ENCODE measurements at regions of chr5 and their contacts with region 1.

Region 1: GRCh38 chr5:134439210-134439664 is 27.6 kb upstream of the CDKN2AIPNL start:
- DNase-seq: peak; percentile 94
- H3K4me3 ChIP-seq: no peak overlapping the region
- H3K27ac ChIP-seq: peak overlapping the region; percentile 72 to 85 (median 81)
- H3K4me1 ChIP-seq: peaks cover 0 to 39% (median 38%) of the 10 kb centered on the region in 4 donors
- H3K27me3 ChIP-seq: no peaks in the 10 kb centered on the region
- CTCF ChIP-seq: no peak
- EP300 ChIP-seq: peak in 2 of 4 donors; percentile 66 to 82
- POLR2A ChIP-seq: no peak

Region 2: GRCh38 chr5:134465816-134466240 is 26.6 kb after region 1 on chr5:
- intact Hi-C with region 1: loop called (anchors 1 kb)
- DNase-seq: peak; percentile 96
- H3K4me3 ChIP-seq: peak overlapping the region; percentile 47 to 59 (median 55)
- H3K27ac ChIP-seq: peak overlapping the region; percentile 93 to 98 (median 96)
- H3K4me1 ChIP-seq: peaks cover 0 to 29% (median 22%) of the 10 kb centered on the region in 4 donors
- H3K27me3 ChIP-seq: no peaks in the 10 kb centered on the region
- CTCF ChIP-seq: no peak
- EP300 ChIP-seq: peak in 2 of 4 donors; percentile 4 to 51
- POLR2A ChIP-seq: peak; percentile 63 to 88

Measured in sigmoid colon (tissue), 7 donors.